ENCODE measurements at regions of chr11 and their contacts with region 1.

Region 1: DNA sequence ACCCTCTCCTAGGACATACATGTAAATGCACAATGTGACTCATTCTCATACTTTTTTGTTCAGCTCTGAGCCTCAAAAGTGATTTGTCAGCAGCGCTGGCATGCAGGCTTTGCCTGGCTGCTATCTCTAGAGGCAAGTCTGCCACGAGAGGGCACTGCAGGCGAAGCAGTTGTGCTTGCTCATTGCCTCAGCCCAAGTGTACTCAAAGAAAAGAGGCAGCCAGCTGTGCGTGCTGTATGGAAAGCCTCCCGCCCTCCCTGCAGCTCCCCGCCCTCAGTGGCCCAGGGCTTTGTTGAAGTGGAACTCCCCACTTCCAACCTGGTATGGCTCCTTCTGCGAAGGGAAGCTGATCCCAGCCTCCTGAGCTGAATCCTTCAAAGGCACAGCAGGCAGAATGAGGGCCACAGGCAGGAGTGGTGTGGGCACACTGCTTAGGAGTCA is 16.3 kb downstream of the SDHAF2 start:
- DNase-seq: peak; percentile 95
- H3K4me3 ChIP-seq: no peak overlapping the region
- H3K27ac ChIP-seq: peak overlapping the region; percentile 69 to 77 (median 74)
- H3K4me1 ChIP-seq: peaks cover 37 to 42% (median 40%) of the 10 kb centered on the region in 4 donors
- H3K27me3 ChIP-seq: no peaks in the 10 kb centered on the region
- CTCF ChIP-seq: peak; percentile 83 to 87 (median 85)
- EP300 ChIP-seq: no peak
- POLR2A ChIP-seq: no peak

Region 2: DNA sequence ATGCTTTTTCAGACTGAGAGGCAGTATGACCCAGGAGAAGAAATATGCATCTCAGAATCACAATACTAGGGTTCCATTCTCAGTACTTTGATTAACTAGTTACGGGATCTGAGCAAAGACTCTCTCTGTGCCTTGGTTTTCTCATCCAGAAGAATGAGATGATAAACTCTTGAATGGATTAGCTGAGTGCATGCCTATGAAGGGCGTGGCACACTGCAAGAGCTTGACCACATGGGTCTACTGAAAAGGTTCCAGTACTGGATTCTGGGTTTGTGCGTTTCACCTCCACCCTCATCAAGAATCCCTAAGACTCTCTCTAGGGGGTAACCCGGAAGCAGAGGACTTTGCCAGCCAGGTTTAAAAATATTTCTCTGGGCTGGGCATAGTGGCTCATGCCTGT is 179.6 kb before region 1 on chr11:
- intact Hi-C with region 1: no loop called
- DNase-seq: no peak
- H3K4me3 ChIP-seq: no peak overlapping the region
- H3K27ac ChIP-seq: no peak overlapping the region
- H3K4me1 ChIP-seq: no peaks in the 10 kb centered on the region
- H3K27me3 ChIP-seq: no peaks in the 10 kb centered on the region
- CTCF ChIP-seq: no peak
- EP300 ChIP-seq: no peak
- POLR2A ChIP-seq: no peak

Region 3: GRCh38 chr11:61516675-61517572 is 70.7 kb after region 1 on chr11:
- intact Hi-C with region 1: loop called (anchors 2 kb)
- DNase-seq: no peak
- H3K4me3 ChIP-seq: peak overlapping the region; percentile 2 to 28 (median 16)
- H3K27ac ChIP-seq: no peak overlapping the region
- H3K4me1 ChIP-seq: peaks cover 5 to 15% (median 13%) of the 10 kb centered on the region in 4 donors
- H3K27me3 ChIP-seq: peaks cover 0 to 40% (median 8%) of the 10 kb centered on the region in 4 donors
- CTCF ChIP-seq: peak in 2 of 3 experiments; percentile 94 to 99
- EP300 ChIP-seq: no peak
- POLR2A ChIP-seq: no peak

Region 4: GRCh38 chr11:61639816-61640443 is 193.7 kb after region 1 on chr11:
- intact Hi-C with region 1: loop called (anchors 10 kb)
- DNase-seq: no peak
- H3K4me3 ChIP-seq: no peak overlapping the region
- H3K27ac ChIP-seq: no peak overlapping the region
- H3K4me1 ChIP-seq: peaks cover 0 to 7% (median 5%) of the 10 kb centered on the region in 4 donors
- H3K27me3 ChIP-seq: peaks cover 0 to 5% (median 0%) of the 10 kb centered on the region in 4 donors
- CTCF ChIP-seq: no peak
- EP300 ChIP-seq: no peak
- POLR2A ChIP-seq: no peak

Measured in esophagus muscularis mucosa (tissue), 4 donors.